Motor neuron (in vitro differentiated cells): ENCODE measurements at regions of chr6 and their contacts with region 1.

Region 1: GRCh38 chr6:25250878-25251277 is 28.3 kb upstream of the CARMIL1 start:
- ATAC-seq: peak in 6 of 8 experiments; percentile 71 to 92 (median 79)
- H3K4me3 ChIP-seq: no peak overlapping the region
- H3K27ac ChIP-seq: no peak overlapping the region
- H3K4me1 ChIP-seq: no peaks in the 10 kb centered on the region

Region 2: GRCh38 chr6:25490018-25490801 is 239.3 kb after region 1 on chr6:
- in situ Hi-C with region 1: loop called in 2 of 9 experiments (anchors 25 kb)
- ATAC-seq: peak; percentile 61 to 97 (median 77)
- H3K4me3 ChIP-seq: no peak overlapping the region
- H3K27ac ChIP-seq: no peak overlapping the region
- H3K4me1 ChIP-seq: no peaks in the 10 kb centered on the region

Region 3: DNA sequence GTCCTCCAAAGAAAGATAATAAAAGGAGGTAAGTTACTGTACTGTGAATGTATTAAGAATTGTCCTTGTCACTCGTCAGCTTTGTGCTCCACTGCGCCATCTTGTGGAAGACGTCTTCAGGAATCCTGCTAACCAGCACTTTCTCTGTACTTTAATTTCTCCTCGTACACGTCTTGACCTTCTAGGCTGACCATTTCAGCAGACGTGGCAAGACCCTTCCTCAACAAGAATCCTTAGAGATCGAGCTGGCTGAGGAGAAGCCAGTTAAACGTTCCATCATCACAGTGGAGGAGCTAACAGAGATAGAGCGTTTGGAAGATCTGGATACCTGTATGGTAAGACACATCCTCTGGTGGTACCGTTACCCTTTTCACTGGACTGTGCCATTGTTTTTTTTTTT is 305.6 kb after region 1 on chr6:
- in situ Hi-C with region 1: loop called in 1 of 9 experiments (anchors 25 kb)
- ATAC-seq: peak in 7 of 8 experiments; percentile 36 to 79 (median 65)
- H3K4me3 ChIP-seq: no peak overlapping the region
- H3K27ac ChIP-seq: no peak overlapping the region
- H3K4me1 ChIP-seq: no peaks in the 10 kb centered on the region

Region 4: DNA sequence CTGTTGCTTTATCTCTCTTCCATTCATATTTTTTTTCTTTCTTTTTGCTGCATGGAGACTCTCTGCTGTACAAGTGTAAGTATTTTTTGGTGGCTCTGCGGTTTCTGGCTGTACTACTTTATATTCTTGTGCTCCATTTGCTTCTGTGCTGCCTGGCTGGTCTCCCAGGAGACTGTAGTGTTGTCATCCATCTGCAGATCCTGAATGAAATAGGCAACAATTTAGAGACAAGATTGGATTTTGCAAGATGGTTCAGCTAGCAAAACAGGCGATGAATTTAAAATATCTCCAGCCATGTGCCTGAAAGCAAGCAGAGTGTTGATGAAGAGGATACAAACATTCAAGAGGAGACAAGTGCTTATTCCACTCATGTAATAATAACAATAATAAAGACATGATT is 326.0 kb after region 1 on chr6:
- in situ Hi-C with region 1: loop called in 5 of 9 experiments (anchors 25 kb)
- ATAC-seq: peak in 3 of 8 experiments; percentile 49 to 95 (median 62)
- H3K4me3 ChIP-seq: no peak overlapping the region
- H3K27ac ChIP-seq: no peak overlapping the region
- H3K4me1 ChIP-seq: peaks cover 6 to 7% of the 10 kb centered on the region in 2 donors

Region 5: GRCh38 chr6:25601800-25602673 is 351.2 kb after region 1 on chr6:
- in situ Hi-C with region 1: loop called in 5 of 9 experiments (anchors 25 kb)
- ATAC-seq: peak in 3 of 8 experiments; percentile 17 to 49 (median 30)
- H3K4me3 ChIP-seq: no peak overlapping the region
- H3K27ac ChIP-seq: no peak overlapping the region
- H3K4me1 ChIP-seq: no peaks in the 10 kb centered on the region

Region 6: DNA sequence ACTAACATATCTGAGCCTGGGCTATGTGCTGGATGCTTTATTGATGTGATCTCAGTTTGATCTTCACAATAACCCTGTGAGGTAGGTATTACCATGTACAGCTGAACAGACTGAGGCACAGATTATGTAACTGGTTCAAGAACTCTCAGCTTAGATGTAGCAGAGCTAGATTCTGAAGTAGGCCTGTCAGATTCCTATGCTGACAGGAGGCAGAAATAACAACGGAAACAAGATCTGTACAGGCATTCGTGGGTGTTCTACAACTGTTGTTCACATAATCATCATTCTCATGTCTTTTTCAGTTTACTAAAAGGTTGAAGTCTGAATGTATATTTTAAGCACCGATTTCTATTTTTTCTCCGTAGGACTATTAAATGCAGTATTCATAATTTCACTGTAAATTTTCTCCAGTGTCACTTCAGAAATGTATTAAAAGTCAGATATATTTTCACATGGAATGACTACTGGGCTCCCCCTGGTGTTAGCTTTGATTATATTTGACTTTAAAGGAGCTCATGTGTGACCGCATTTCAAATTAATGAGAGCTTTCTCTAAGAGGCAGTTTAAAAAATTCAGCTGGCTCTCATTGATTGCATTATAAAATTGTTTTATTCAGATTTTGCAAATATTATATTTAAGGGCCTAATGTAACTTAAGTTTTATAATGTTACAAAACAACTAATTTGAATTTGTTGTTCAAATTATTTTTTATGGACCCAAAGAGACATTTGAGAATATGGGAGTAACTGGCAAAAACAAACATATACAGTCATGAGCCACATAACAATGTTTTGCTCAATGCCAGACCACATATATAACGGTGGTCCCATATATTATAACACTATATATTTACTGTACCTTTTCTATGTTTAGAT is 467.2 kb after region 1 on chr6:
- in situ Hi-C with region 1: loop called in 1 of 9 experiments (anchors 25 kb)
- ATAC-seq: peak in 1 of 8 experiments; percentile 35
- H3K4me3 ChIP-seq: no peak overlapping the region
- H3K27ac ChIP-seq: no peak overlapping the region
- H3K4me1 ChIP-seq: peaks cover 13 to 21% of the 10 kb centered on the region in 2 donors

Region 7: DNA sequence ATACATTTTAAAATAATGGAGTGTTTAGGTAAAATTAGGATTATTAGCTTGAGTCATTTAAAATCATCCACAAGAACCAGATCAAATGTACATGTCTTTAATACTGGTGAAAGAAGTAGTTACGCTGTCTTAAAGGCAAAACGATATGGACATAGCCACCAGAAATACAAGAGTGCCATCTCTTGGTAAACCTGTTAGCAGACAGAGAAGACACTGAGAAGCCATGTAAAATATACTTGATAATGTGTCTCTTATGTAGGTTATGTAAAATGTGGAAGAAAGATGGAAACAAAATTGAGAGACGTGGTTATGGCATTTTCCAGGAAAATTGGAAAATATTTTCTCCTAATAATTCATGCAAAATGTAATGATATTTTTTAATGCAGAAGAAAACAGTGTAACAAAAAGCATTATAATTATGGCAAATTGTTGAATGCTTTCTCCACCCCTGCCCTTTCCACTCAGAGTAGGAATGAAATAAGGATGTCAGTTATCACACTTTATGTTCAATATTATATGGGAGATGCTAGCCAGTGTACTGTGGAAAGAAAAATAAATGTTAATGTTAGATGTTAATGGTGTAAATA is 691.8 kb after region 1 on chr6:
- in situ Hi-C with region 1: loop called in 2 of 9 experiments (anchors 25 kb)
- ATAC-seq: peak in 6 of 8 experiments; percentile 42 to 94 (median 82)
- H3K4me3 ChIP-seq: no peak overlapping the region
- H3K27ac ChIP-seq: no peak overlapping the region
- H3K4me1 ChIP-seq: no peaks in the 10 kb centered on the region